ENCODE measurements at regions of chr2 and their contacts with region 1.

Region 1: GRCh38 chr2:108988796-108989713 is at the start of gene EDAR:
- DNase-seq: peak; percentile 76 to 82
- H3K4me3 ChIP-seq: peak within 1 kb of the TSS; percentile 31
- H3K4me3 Mint-ChIP-seq: peak within 1 kb of the TSS; percentile 71
- H3K27ac Mint-ChIP-seq: no peak within 1 kb of the TSS
- H3K4me1 ChIP-seq: peaks cover 30% of the 10 kb centered on the region
- H3K4me1 Mint-ChIP-seq: peaks cover 34% of the 10 kb centered on the region
- H3K27me3 ChIP-seq: no peaks in the 10 kb centered on the region
- H3K27me3 Mint-ChIP-seq: no peaks in the 10 kb centered on the region
- CTCF ChIP-seq: peak; percentile 67 to 92
- total RNA-seq, gene EDAR: 0.82 and 0.95 TPM in 2 replicates

Region 2: GRCh38 chr2:108786354-108787199 is 202.5 kb before region 1 on chr2 and contains the start of gene CCDC138:
- CTCF ChIA-PET with region 1: no interaction called
- POLR2A ChIA-PET with region 1: no interaction called
- intact Hi-C with region 1: loop called (anchors 1 kb)
- DNase-seq: peak; percentile 93 to 97
- H3K4me3 ChIP-seq: peak within 1 kb of the TSS; percentile 69
- H3K4me3 Mint-ChIP-seq: peak within 1 kb of the TSS; percentile 93
- H3K27ac Mint-ChIP-seq: peak within 1 kb of the TSS; percentile 94
- H3K4me1 ChIP-seq: peaks cover 5% of the 10 kb centered on the region; the same call in 1 of the 2 replicates
- H3K4me1 Mint-ChIP-seq: no peaks in the 10 kb centered on the region
- H3K27me3 ChIP-seq: no peaks in the 10 kb centered on the region
- H3K27me3 Mint-ChIP-seq: no peaks in the 10 kb centered on the region
- CTCF ChIP-seq: no peak
- total RNA-seq, gene CCDC138: 14.4 and 14.9 TPM in 2 replicates